Endothelial cell of umbilical vein (primary cell): ENCODE measurements at regions of chr3 and their contacts with region 1.

Region 1: GRCh38 chr3:167032261-167032876 is 347.7 kb downstream of the ZBBX start:
- DNase-seq: no peak
- H3K4me3 ChIP-seq: no peak overlapping the region
- H3K27ac ChIP-seq: no peak overlapping the region
- H3K4me1 ChIP-seq: no peaks in the 10 kb centered on the region
- H3K27me3 ChIP-seq: no peaks in the 10 kb centered on the region
- CTCF ChIP-seq: no peak
- POLR2A ChIP-seq: no peak

Region 2: GRCh38 chr3:165206454-165207266 is 1825.7 kb before region 1 on chr3:
- CTCF ChIA-PET with region 1: interaction called, 3 read pairs
- POLR2A ChIA-PET with region 1: no interaction called
- dilution Hi-C with region 1: no loop called
- intact Hi-C with region 1: loop called (anchors 2 kb)
- DNase-seq: peak; percentile 64
- H3K4me3 ChIP-seq: no peak overlapping the region
- H3K27ac ChIP-seq: no peak overlapping the region
- H3K4me1 ChIP-seq: no peaks in the 10 kb centered on the region
- H3K27me3 ChIP-seq: no peaks in the 10 kb centered on the region
- CTCF ChIP-seq: peak; percentile 83 to 88
- POLR2A ChIP-seq: no peak

Region 3: GRCh38 chr3:165624761-165625160 is 1407.6 kb before region 1 on chr3:
- CTCF ChIA-PET with region 1: no interaction called
- POLR2A ChIA-PET with region 1: no interaction called
- dilution Hi-C with region 1: no loop called
- intact Hi-C with region 1: loop called (anchors 5 kb)
- DNase-seq: peak; percentile 5
- H3K4me3 ChIP-seq: no peak overlapping the region
- H3K27ac ChIP-seq: no peak overlapping the region
- H3K4me1 ChIP-seq: no peaks in the 10 kb centered on the region
- H3K27me3 ChIP-seq: no peaks in the 10 kb centered on the region
- CTCF ChIP-seq: peak; percentile 24 to 43
- POLR2A ChIP-seq: no peak

Region 4: DNA sequence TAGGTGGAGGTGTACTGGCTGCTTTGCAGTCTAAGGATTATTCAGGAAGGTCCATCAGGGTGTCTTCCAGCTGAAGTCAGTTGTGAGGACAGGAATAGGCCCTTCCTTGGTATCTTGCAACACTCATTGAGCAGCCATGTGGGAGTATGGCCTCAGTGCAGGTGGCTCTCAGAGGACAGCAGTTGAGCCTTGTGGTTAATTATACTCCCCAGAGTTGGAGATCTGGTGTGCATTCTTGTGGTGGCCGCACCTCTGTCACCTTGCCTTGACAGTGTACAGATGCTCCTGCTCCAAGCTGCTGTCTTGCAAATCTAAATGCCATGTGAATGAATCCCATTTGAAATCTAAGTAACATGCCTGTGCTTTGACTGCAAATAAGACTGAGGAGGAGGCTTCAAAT is 855.2 kb before region 1 on chr3:
- CTCF ChIA-PET with region 1: no interaction called
- POLR2A ChIA-PET with region 1: no interaction called
- dilution Hi-C with region 1: no loop called
- intact Hi-C with region 1: no loop called
- DNase-seq: no peak
- H3K4me3 ChIP-seq: no peak overlapping the region
- H3K27ac ChIP-seq: no peak overlapping the region
- H3K4me1 ChIP-seq: no peaks in the 10 kb centered on the region
- H3K27me3 ChIP-seq: no peaks in the 10 kb centered on the region
- CTCF ChIP-seq: no peak
- POLR2A ChIP-seq: no peak

Region 5: GRCh38 chr3:166759736-166760513 is 272.4 kb before region 1 on chr3:
- CTCF ChIA-PET with region 1: no interaction called
- POLR2A ChIA-PET with region 1: no interaction called
- dilution Hi-C with region 1: no loop called
- intact Hi-C with region 1: no loop called
- DNase-seq: no peak
- H3K4me3 ChIP-seq: no peak overlapping the region
- H3K27ac ChIP-seq: no peak overlapping the region
- H3K4me1 ChIP-seq: no peaks in the 10 kb centered on the region
- H3K27me3 ChIP-seq: no peaks in the 10 kb centered on the region
- CTCF ChIP-seq: no peak
- POLR2A ChIP-seq: no peak